CD8-positive, alpha-beta memory T cell (primary cell): ENCODE measurements at regions of chr15 and their contacts with region 1.

Region 1: DNA sequence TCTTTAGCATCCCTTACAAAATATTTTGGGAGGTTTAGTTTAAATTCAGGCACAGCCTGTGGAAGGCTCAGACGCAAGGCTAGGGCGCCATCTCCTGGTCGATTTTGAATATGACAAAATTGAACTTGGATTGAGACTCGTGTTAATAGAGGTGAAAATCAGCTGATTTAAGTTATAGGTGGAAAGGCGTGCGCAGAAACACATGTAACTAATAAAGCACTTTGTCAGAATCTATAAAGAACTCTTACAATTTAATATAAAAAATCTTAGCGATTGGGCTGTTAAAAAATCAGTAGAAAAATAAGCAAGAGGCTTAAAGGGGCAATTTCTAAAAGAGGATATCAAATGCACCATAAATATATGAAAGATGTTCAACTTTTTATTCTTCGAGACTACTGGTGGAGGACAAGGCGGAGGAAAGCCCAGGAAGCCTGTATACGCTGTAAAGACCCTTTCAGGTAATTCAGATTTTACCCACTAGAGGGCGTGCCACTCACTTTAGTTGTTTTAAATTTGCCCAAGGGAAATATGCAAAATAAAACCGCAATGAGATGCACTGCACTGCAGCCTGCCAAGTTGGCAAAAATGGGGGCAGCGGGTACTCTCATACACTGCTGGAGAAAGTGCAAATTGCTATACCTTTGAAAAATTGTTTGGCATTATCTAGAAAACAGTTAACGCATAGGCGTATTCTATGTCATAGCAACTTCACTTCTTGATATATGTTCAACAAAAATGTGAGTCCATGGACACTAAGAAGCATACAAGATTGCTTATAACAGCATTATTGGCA is 64.7 kb downstream of the SLC30A4 start:
- DNase-seq: peak; percentile 58 to 81 (median 78)
- H3K4me3 ChIP-seq: peak overlapping the region; percentile 70
- H3K4me3 Mint-ChIP-seq: peak overlapping the region; percentile 79 to 93 (median 87)
- H3K27ac ChIP-seq: peak overlapping the region; percentile 29
- H3K27ac Mint-ChIP-seq: peak overlapping the region; percentile 78 to 94 (median 90)
- H3K4me1 ChIP-seq: peaks cover 40% of the 10 kb centered on the region
- H3K4me1 Mint-ChIP-seq: peaks cover 43 to 55% (median 53%) of the 10 kb centered on the region in 3 donors
- H3K27me3 ChIP-seq: no peaks in the 10 kb centered on the region
- H3K27me3 Mint-ChIP-seq: peaks cover 0 to 1% of the 10 kb centered on the region in 2 donors

Region 2: DNA sequence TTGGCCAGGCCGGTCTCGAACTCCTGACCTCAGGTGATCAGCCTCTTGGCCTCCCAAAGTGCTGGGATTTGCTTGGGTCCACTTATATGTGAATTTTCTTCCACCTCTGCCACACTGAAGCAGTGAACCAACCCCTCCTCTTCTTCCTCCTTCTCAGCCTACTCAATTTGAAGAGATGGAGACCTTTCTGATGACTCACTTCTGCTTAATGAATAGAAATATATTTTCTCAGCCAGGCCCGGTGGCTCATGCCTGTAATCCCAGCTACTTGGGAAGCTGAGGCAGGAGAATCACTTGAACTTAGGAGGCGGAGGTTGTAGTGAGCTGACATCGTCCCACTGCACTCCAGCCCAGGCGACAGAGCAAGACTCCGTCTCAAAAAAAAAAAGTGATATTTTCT is 32.7 kb before region 1 on chr15:
- CTCF ChIA-PET with region 1: interaction called, 72 read pairs
- POLR2A ChIA-PET with region 1: no interaction called
- DNase-seq: no peak
- H3K4me3 ChIP-seq: no peak overlapping the region
- H3K4me3 Mint-ChIP-seq: no peak overlapping the region
- H3K27ac ChIP-seq: no peak overlapping the region
- H3K27ac Mint-ChIP-seq: no peak overlapping the region
- H3K4me1 ChIP-seq: no peaks in the 10 kb centered on the region
- H3K4me1 Mint-ChIP-seq: peaks cover 0 to 4% (median 0%) of the 10 kb centered on the region in 3 donors
- H3K27me3 ChIP-seq: no peaks in the 10 kb centered on the region
- H3K27me3 Mint-ChIP-seq: no peaks in the 10 kb centered on the region

Region 3: GRCh38 chr15:45429974-45430792 is 27.7 kb before region 1 on chr15:
- CTCF ChIA-PET with region 1: interaction called, 72 read pairs
- POLR2A ChIA-PET with region 1: no interaction called
- DNase-seq: peak; percentile 77 to 90 (median 85)
- H3K4me3 ChIP-seq: peak overlapping the region; percentile 34
- H3K4me3 Mint-ChIP-seq: peak overlapping the region in 5 of 7 donors; percentile 62 to 73 (median 68)
- H3K27ac ChIP-seq: no peak overlapping the region
- H3K27ac Mint-ChIP-seq: peak overlapping the region in 1 of 8 donors; percentile 78
- H3K4me1 ChIP-seq: no peaks in the 10 kb centered on the region
- H3K4me1 Mint-ChIP-seq: peaks cover 5% of the 10 kb centered on the region in 3 donors
- H3K27me3 ChIP-seq: no peaks in the 10 kb centered on the region
- H3K27me3 Mint-ChIP-seq: peaks cover 0 to 1% of the 10 kb centered on the region in 2 donors

Region 4: DNA sequence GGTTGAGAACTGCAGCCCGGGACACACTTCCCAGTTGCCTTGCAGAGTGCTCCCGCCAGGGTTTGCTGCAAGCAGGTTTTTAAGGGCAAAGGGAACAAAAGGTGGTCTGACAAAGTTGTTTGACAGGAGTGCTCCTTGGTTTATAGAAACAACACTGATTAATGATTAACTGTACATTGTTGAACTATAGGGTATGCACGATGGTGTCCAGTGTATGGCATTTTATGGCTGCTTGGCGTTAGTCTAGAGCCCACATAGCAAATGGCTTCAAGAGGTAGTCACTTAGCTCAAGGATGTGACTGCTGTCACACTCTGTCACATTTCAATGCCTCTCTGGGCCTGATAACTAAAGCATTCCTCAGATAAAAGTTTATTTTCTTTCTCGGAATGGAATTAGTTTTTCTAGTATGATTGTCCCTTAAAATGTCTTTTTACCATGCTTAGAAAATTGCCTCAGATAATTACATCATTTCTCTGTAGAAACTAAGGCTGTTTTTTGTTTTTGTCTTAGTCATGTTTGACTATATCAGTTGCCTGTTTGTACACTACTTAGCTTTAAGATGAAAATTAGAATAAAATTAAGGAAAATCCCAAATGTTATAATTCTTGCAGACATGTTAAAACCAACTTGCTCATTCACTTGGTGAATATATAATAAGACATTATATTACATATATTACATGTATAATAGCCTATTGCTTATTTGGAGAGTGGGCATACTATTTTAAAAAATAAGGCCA is 18.1 kb before region 1 on chr15:
- CTCF ChIA-PET with region 1: interaction called, 12 read pairs
- POLR2A ChIA-PET with region 1: interaction called, 3 read pairs
- DNase-seq: no peak
- H3K4me3 ChIP-seq: no peak overlapping the region
- H3K4me3 Mint-ChIP-seq: no peak overlapping the region
- H3K27ac ChIP-seq: no peak overlapping the region
- H3K27ac Mint-ChIP-seq: no peak overlapping the region
- H3K4me1 ChIP-seq: no peaks in the 10 kb centered on the region
- H3K4me1 Mint-ChIP-seq: no peaks in the 10 kb centered on the region
- H3K27me3 ChIP-seq: no peaks in the 10 kb centered on the region
- H3K27me3 Mint-ChIP-seq: peaks cover 0 to 3% of the 10 kb centered on the region in 2 donors

Region 5: GRCh38 chr15:45468294-45468693 is 10.5 kb after region 1 on chr15:
- CTCF ChIA-PET with region 1: interaction called, 14 read pairs
- POLR2A ChIA-PET with region 1: no interaction called
- DNase-seq: no peak
- H3K4me3 ChIP-seq: no peak overlapping the region
- H3K4me3 Mint-ChIP-seq: no peak overlapping the region
- H3K27ac ChIP-seq: no peak overlapping the region
- H3K27ac Mint-ChIP-seq: no peak overlapping the region
- H3K4me1 ChIP-seq: no peaks in the 10 kb centered on the region
- H3K4me1 Mint-ChIP-seq: peaks cover 0 to 3% (median 2%) of the 10 kb centered on the region in 3 donors
- H3K27me3 ChIP-seq: peaks cover 5% of the 10 kb centered on the region
- H3K27me3 Mint-ChIP-seq: peaks cover 5 to 38% of the 10 kb centered on the region in 2 donors

Region 6: DNA sequence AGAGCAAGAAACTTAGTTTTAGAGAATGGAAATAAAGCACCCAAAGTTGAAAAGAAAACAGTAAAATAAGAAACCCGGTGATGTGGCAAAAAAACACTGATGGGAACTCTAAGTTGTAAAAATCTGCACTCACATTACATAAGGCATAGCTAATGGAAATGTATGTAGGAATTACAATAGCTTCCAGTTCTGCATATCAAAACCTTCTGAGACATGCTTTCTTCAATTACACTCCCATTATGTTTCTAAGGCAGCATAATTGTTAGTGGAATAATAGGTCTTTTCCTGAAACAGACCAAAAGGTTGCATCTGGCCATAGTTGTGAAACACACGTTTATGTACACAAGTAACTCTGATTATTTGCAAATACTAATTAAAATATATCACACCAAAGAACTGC is 23.3 kb after region 1 on chr15:
- CTCF ChIA-PET with region 1: no interaction called
- POLR2A ChIA-PET with region 1: no interaction called
- DNase-seq: no peak
- H3K4me3 ChIP-seq: no peak overlapping the region
- H3K4me3 Mint-ChIP-seq: no peak overlapping the region
- H3K27ac ChIP-seq: no peak overlapping the region
- H3K27ac Mint-ChIP-seq: peak overlapping the region in 1 of 8 donors; percentile 8
- H3K4me1 ChIP-seq: no peaks in the 10 kb centered on the region
- H3K4me1 Mint-ChIP-seq: no peaks in the 10 kb centered on the region
- H3K27me3 ChIP-seq: no peaks in the 10 kb centered on the region
- H3K27me3 Mint-ChIP-seq: no peaks in the 10 kb centered on the region

Region 7: GRCh38 chr15:45611305-45611704 is 153.5 kb after region 1 on chr15:
- CTCF ChIA-PET with region 1: interaction called, 28 read pairs
- POLR2A ChIA-PET with region 1: no interaction called
- DNase-seq: peak in 1 of 5 donors; percentile 7
- H3K4me3 ChIP-seq: no peak overlapping the region
- H3K4me3 Mint-ChIP-seq: no peak overlapping the region
- H3K27ac ChIP-seq: no peak overlapping the region
- H3K27ac Mint-ChIP-seq: no peak overlapping the region
- H3K4me1 ChIP-seq: no peaks in the 10 kb centered on the region
- H3K4me1 Mint-ChIP-seq: peaks cover 0 to 3% (median 0%) of the 10 kb centered on the region in 3 donors
- H3K27me3 ChIP-seq: no peaks in the 10 kb centered on the region
- H3K27me3 Mint-ChIP-seq: no peaks in the 10 kb centered on the region